Adrenal gland (tissue), 19 donors: ENCODE measurements at regions of chr2 and their contacts with region 1.

Region 1: GRCh38 chr2:128321784-128322714 is 3.4 kb upstream of the HS6ST1 start:
- DNase-seq: peak; percentile 85 to 93 (median 88)
- H3K4me3 ChIP-seq: peak overlapping the region in 3 of 4 donors; percentile 40 to 78 (median 42)
- H3K27ac ChIP-seq: peak overlapping the region in 4 of 5 donors; percentile 67 to 93 (median 85)
- H3K4me1 ChIP-seq: peaks cover 11 to 20% of the 10 kb centered on the region in 2 donors
- H3K27me3 ChIP-seq: no peaks in the 10 kb centered on the region
- CTCF ChIP-seq: peak; percentile 54 to 98 (median 80)
- POLR2A ChIP-seq: peak in 1 of 2 donors; percentile 77

Region 2: GRCh38 chr2:128187032-128187654 is 134.9 kb before region 1 on chr2:
- intact Hi-C with region 1: loop called in 1 of 2 experiments (anchors 10 kb)
- DNase-seq: no peak
- H3K4me3 ChIP-seq: no peak overlapping the region
- H3K27ac ChIP-seq: peak overlapping the region in 2 of 5 donors; percentile 18 to 20
- H3K4me1 ChIP-seq: peaks cover 0 to 9% of the 10 kb centered on the region in 2 donors
- H3K27me3 ChIP-seq: no peaks in the 10 kb centered on the region
- CTCF ChIP-seq: no peak
- POLR2A ChIP-seq: no peak

Region 3: GRCh38 chr2:128208023-128208665 is 113.9 kb before region 1 on chr2:
- intact Hi-C with region 1: no loop called
- DNase-seq: no peak
- H3K4me3 ChIP-seq: no peak overlapping the region
- H3K27ac ChIP-seq: no peak overlapping the region
- H3K4me1 ChIP-seq: no peaks in the 10 kb centered on the region
- H3K27me3 ChIP-seq: no peaks in the 10 kb centered on the region
- CTCF ChIP-seq: no peak
- POLR2A ChIP-seq: no peak

Region 4: DNA sequence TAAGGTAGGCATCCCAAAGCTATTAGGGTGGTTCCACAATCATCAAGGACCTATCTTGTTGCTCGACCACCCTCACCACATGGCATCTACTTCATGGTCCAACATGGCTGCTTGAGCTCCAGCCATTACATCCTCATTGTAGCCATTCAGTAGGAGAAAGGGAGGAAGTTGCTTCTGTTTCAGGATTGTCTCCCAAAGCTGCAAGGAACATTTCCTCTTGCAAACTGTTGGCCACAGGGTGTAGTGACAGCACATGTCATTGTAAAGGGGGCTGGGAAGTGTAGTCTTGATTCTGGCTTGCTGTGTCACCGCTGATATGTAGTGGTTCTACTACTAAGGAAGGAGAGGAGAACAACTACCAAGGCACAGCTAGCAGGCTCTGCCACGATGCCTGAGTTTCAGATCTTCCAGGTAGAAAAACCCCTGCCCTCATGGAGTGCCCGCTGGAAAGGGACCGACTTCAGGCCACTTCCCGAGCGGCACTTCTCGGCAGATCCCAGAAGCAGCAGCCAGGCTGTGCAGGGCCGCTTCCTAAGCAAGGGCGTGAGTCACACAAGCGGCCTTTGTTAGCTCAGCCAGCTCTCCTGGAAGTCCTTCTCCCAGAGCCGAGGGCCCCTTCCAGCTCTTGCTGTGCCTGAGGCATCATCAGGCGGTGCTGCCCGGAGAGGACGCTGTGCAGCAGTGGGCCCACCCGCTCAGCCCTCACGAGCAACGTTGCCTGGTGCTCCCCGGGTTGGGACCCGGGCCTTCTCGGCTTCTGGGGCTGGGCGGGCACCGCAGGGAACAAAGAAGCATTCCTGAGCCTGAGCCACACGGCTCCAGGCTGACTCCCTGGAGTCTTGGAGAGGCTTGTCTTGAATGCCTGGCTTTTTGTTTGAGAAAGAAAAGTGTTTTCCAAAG is 61.6 kb before region 1 on chr2:
- intact Hi-C with region 1: loop called in 1 of 2 experiments (anchors 5 kb)
- DNase-seq: peak; percentile 75 to 94 (median 88)
- H3K4me3 ChIP-seq: no peak overlapping the region
- H3K27ac ChIP-seq: peak overlapping the region in 4 of 5 donors; percentile 36 to 76 (median 70)
- H3K4me1 ChIP-seq: peaks cover 0 to 4% of the 10 kb centered on the region in 2 donors
- H3K27me3 ChIP-seq: no peaks in the 10 kb centered on the region
- CTCF ChIP-seq: peak in 5 of 6 experiments; percentile 29 to 49 (median 45)
- POLR2A ChIP-seq: peak in 1 of 2 donors; percentile 46

Region 5: GRCh38 chr2:128473175-128474035 is 151.4 kb after region 1 on chr2:
- intact Hi-C with region 1: no loop called
- DNase-seq: peak in 4 of 7 donors; percentile 14 to 58 (median 40)
- H3K4me3 ChIP-seq: peak overlapping the region in 1 of 4 donors; percentile 34
- H3K27ac ChIP-seq: peak overlapping the region in 2 of 5 donors; percentile 3 to 54
- H3K4me1 ChIP-seq: no peaks in the 10 kb centered on the region
- H3K27me3 ChIP-seq: no peaks in the 10 kb centered on the region
- CTCF ChIP-seq: no peak
- POLR2A ChIP-seq: no peak

Region 6: GRCh38 chr2:128531856-128532255 is 209.8 kb after region 1 on chr2:
- intact Hi-C with region 1: loop called in 1 of 2 experiments (anchors 5 kb)
- DNase-seq: no peak
- H3K4me3 ChIP-seq: no peak overlapping the region
- H3K27ac ChIP-seq: no peak overlapping the region
- H3K4me1 ChIP-seq: no peaks in the 10 kb centered on the region
- H3K27me3 ChIP-seq: no peaks in the 10 kb centered on the region
- CTCF ChIP-seq: peak in 4 of 6 experiments; percentile 24 to 49 (median 36)
- POLR2A ChIP-seq: no peak

Region 7: GRCh38 chr2:128644718-128645256 is 322.7 kb after region 1 on chr2:
- intact Hi-C with region 1: loop called in 1 of 2 experiments (anchors 10 kb)
- DNase-seq: peak in 1 of 7 donors; percentile 3
- H3K4me3 ChIP-seq: no peak overlapping the region
- H3K27ac ChIP-seq: no peak overlapping the region
- H3K4me1 ChIP-seq: no peaks in the 10 kb centered on the region
- H3K27me3 ChIP-seq: no peaks in the 10 kb centered on the region
- CTCF ChIP-seq: no peak
- POLR2A ChIP-seq: no peak

Region 8: DNA sequence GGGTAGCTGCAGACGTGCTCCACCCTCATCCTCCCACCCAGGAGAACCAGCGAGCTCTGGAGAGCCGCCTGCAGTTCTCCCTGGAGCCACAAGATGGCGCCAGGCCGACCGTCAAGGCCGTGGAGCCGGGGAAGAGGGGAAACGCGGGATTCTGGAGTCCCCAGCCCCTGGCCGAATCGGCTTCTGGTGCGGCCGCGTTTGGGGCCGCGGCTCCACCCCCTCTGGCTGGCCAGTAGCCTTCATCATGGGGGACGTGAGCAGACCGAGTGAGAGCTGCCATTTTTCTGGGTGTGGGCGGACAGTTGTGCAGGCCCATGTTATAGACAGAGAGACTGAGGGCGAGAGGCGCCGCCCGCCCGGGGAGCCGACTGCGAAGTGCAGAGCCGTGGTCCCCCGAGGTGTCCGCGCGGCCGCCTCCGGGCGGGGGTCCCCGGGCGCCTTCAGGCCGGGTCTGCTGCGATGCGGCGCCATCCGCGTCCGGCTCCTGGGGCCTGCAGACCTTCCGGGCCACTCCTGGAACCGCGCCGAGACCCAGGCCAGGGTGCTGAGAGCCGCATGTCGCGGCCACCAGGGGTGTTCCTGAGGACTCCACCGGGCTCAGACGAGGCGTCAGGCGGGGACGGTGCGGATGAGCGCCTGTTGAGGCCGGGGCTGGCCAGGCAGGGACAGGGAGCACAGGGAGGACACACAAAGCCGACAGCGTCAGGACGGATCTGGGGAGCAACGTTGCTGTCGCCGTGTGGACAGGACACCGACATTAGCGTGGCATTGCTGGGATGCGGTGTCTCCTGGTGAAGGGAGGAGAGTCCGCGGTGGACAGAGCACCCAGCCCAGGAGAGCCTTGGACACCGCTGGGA is 414.9 kb after region 1 on chr2:
- intact Hi-C with region 1: loop called in 1 of 2 experiments (anchors 10 kb)
- DNase-seq: peak; percentile 70 to 90 (median 84)
- H3K4me3 ChIP-seq: peak overlapping the region in 1 of 4 donors; percentile 37
- H3K27ac ChIP-seq: no peak overlapping the region
- H3K4me1 ChIP-seq: peaks cover 9 to 28% of the 10 kb centered on the region in 2 donors
- H3K27me3 ChIP-seq: no peaks in the 10 kb centered on the region
- CTCF ChIP-seq: peak; percentile 92 to 99 (median 96)
- POLR2A ChIP-seq: no peak

Region 9: DNA sequence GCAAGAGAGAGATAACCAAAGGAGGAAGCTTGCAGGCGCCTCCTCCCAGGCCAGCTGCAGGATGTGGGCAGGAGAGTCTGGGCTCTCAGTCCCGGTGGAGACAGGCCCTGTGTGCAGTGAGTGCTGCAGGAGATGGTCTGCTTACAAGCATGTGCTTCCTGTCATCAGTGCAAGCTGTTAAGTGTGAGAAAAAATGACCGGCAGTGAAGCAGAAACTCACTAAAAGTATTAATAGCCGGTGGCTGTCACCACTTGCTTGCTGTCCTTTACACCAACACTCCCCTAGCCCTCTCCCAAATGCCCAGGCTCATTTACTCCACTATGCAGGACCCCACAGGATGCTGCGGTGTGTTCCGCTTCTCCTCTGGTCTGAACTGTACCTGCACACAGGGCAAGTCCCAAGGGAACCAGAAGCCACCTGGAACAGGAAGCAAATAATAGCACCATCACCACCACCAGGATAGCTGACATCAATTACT is 432.2 kb after region 1 on chr2:
- intact Hi-C with region 1: loop called in 1 of 2 experiments (anchors 10 kb)
- DNase-seq: peak in 6 of 7 donors; percentile 53 to 78 (median 62)
- H3K4me3 ChIP-seq: no peak overlapping the region
- H3K27ac ChIP-seq: peak overlapping the region in 1 of 5 donors; percentile 47
- H3K4me1 ChIP-seq: peaks cover 19 to 31% of the 10 kb centered on the region in 2 donors
- H3K27me3 ChIP-seq: no peaks in the 10 kb centered on the region
- CTCF ChIP-seq: no peak
- POLR2A ChIP-seq: no peak